ENCODE measurements at regions of chr6 and their contacts with region 1.

Region 1: DNA sequence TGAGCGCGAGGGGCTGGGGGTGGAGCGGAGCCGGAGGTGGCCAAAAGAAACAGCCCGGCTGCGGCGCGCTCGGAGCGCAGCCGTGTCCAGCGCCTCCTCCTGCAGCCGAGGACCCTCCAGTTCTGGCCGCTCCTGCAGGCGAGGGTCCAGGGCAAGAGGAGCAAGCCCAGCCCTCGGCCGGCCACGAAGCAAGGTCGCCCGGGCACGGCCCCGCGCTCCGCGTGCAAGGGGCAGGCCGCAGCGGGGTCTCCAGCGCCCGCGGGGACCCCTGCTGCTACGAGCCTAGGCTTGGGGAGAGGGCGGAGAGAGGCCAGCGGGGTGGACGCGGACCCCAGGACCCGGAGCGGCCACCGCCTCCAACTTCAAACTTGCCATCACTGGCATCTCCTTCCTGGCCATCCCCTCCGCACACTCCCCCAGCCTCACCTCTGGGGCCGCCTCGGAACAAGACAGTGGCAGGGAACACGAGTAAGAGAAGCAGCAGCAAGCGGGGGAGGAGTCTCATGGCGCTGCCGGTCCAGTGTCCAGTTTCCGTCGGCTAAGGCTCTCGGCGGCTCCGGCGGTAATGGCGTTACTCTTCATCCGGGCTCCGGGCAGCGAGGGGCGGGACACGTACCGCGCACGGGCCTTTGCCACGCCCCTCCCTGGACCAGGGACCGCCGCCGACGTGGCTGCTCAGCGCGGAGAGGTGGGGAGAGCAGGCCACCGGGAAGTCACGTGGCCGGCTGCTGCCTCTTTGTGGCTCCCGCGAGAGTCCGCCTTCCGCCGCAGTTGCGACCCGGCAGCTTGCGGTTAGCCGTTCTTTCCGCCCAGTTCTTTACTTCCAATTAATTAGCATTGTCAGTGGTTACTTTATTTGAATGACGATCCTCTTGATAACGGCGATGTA is at the start of gene SSR1:
- DNase-seq: peak; percentile 97
- H3K4me3 ChIP-seq: peak within 1 kb of the TSS; percentile 98
- H3K27ac ChIP-seq: peak within 1 kb of the TSS; percentile 77
- H3K4me1 ChIP-seq: peaks cover 26% of the 10 kb centered on the region
- CTCF ChIP-seq: no peak
- total RNA-seq, gene SSR1: 31.6 and 36.0 TPM in 2 replicates

Region 2: GRCh38 chr6:6751619-6752023 is 561.2 kb before region 1 on chr6:
- CTCF ChIA-PET with region 1: interaction called, 12 read pairs
- POLR2A ChIA-PET with region 1: no interaction called
- intact Hi-C with region 1: no loop called
- DNase-seq: no peak
- H3K4me3 ChIP-seq: no peak overlapping the region
- H3K27ac ChIP-seq: no peak overlapping the region
- H3K4me1 ChIP-seq: no peaks in the 10 kb centered on the region
- CTCF ChIP-seq: no peak

Region 3: DNA sequence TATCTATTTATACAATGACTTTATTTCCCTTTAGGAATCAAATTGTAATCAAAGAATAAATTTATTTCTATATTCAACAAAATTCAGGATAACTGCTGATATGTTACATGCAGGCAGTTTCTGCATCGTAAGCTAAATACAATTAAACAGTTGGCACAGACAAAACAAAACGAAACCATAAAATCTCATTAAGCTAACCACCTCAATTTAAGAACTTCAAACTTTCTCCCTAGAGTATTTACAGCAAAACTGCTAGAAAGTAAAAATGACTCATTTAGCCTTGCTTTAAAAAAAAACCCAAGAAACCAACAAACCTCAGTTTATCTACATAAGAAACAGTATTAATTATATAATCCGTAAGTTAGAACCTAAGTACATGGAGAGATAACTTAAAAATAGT is 16.9 kb before region 1 on chr6:
- CTCF ChIA-PET with region 1: no interaction called
- POLR2A ChIA-PET with region 1: interaction called, 4 read pairs
- intact Hi-C with region 1: loop called (anchors 2 kb)
- DNase-seq: no peak
- H3K4me3 ChIP-seq: no peak overlapping the region
- H3K27ac ChIP-seq: no peak overlapping the region
- H3K4me1 ChIP-seq: no peaks in the 10 kb centered on the region
- CTCF ChIP-seq: no peak

Region 4: GRCh38 chr6:7389451-7390225 is 76.8 kb after region 1 on chr6 and contains the starts of genes CAGE1 and RIOK1:
- CTCF ChIA-PET with region 1: no interaction called
- POLR2A ChIA-PET with region 1: interaction called, 4 read pairs
- intact Hi-C with region 1: loop called (anchors 1 kb)
- DNase-seq: peak; percentile 94
- H3K4me3 ChIP-seq: peak within 1 kb of the TSS; percentile 83
- H3K27ac ChIP-seq: peak within 1 kb of the TSS; percentile 84
- H3K4me1 ChIP-seq: peaks cover 21% of the 10 kb centered on the region
- CTCF ChIP-seq: no peak
- total RNA-seq, gene CAGE1: 0.44 and 1.1 TPM in 2 replicates
- total RNA-seq, gene RIOK1: 55.0 and 85.0 TPM in 2 replicates